ENCODE measurements at regions of chr11 and their contacts with region 1.

Region 1: GRCh38 chr11:107581147-107581546 is 9.8 kb upstream of the ELMOD1 start:
- H3K4me3 ChIP-seq: no peak overlapping the region
- H3K27ac ChIP-seq: no peak overlapping the region
- H3K4me1 ChIP-seq: no peaks in the 10 kb centered on the region
- CTCF ChIP-seq: no peak

Region 2: DNA sequence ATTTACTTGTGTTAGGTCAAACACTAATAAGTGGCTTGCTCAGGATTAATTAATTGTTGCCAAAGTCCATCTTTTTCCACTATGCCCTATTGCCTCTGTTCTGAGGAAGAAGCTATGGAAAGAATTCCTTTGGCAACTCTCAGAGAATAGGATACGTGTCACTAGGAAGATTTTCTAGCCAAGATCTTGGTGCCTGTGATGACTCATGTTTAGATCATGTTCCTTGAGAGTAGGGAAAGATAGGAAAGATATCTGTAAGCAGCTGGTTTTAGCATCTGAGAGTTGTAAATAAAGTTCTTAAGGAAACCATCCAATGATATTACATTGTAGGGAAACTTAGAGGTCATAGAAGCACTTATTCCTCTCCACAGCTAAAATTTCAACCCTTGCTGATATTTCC is 115.0 kb after region 1 on chr11:
- CTCF ChIA-PET with region 1: interaction called, 10 read pairs
- POLR2A ChIA-PET with region 1: no interaction called
- H3K4me3 ChIP-seq: no peak overlapping the region
- H3K27ac ChIP-seq: no peak overlapping the region
- H3K4me1 ChIP-seq: no peaks in the 10 kb centered on the region
- CTCF ChIP-seq: no peak

Measured in HEK293 (cell line).